Cardiac septum (tissue), 1 donor: ENCODE measurements at regions of chr11 and their contacts with region 1.

Region 1: DNA sequence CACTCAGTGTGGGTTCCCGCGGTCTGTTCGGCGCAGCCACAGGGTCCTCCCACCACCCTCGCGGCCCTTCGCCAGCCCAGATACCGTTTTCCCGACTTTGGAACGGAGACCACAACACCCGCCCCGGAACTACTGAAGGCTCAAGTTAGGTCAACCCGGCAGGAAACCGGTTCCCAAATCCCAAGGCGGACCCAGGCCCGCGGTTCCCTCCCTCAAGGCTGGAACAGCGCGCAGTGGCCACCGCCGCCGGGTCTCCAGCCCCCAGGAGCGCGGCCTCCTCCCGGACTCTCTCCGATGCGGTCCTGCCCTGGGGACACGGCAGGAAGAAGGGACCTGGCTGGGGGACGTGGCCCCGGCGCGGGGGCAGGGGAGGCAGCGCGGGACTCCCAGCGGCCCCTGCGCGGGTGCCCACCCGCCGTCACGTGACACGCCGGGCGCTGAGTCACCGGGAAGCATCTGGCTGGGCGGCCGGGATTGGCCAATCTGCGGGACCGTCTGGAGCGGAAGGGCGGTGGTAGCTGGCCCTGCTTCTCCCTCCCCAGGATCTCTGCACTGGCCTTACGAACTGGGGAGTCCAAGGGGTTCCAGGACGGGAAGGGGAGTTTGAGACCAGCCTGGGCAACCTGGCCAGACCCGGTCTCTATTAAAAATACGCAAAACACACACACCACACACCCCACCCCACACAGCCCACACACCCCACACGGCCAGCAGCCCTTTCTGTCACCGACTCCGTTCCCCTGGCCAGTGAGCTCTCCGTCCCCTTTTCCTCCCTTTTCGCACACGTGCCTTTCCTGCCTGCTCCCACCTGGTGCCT is 21.5 kb upstream of the MALAT1 start:
- DNase-seq: peak; percentile 99

Region 2: DNA sequence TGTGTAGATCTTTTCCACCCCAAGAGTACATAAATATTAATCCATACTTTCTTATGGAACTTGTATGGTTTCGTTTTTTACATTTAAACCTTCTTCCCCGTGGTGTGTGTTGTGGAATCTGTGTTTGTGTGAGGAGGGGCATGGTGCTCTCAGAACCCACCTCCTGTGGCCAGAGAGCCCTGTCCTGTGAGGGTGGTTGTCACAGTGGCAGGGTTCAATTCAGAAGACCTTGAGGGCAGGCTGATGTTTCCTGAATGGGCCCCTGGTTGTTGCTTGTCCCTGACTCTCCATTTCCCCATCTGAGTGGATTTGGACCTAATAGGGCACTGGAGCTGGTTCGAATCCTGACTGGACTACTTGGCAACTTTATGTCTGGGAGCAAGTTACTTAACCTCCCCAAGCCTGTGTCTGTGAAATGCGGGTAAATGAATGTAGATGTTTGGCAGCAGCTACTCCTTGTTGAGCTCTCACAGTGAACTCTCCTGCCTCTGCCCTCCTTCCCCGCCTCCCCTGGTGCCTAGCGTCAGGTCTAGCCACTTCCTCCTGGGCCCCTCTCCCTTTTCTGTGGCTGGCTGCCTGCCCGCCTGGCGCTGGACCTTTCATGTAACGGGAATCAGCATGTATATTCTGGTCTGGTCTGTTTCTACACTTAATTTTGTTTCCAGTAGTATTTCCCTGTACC is 47.5 kb before region 1 on chr11:
- intact Hi-C with region 1: no loop called
- DNase-seq: peak; percentile 90

Region 3: GRCh38 chr11:65491614-65492386 is 14.4 kb after region 1 on chr11:
- intact Hi-C with region 1: loop called (anchors 2 kb)
- DNase-seq: peak; percentile 91

Region 4: GRCh38 chr11:65497141-65498041 is 20.0 kb after region 1 on chr11:
- intact Hi-C with region 1: loop called (anchors 1 kb)
- DNase-seq: peak; percentile 99

Region 5: GRCh38 chr11:65546217-65546958 is 69.0 kb after region 1 on chr11:
- intact Hi-C with region 1: no loop called
- DNase-seq: peak; percentile 96

Region 6: DNA sequence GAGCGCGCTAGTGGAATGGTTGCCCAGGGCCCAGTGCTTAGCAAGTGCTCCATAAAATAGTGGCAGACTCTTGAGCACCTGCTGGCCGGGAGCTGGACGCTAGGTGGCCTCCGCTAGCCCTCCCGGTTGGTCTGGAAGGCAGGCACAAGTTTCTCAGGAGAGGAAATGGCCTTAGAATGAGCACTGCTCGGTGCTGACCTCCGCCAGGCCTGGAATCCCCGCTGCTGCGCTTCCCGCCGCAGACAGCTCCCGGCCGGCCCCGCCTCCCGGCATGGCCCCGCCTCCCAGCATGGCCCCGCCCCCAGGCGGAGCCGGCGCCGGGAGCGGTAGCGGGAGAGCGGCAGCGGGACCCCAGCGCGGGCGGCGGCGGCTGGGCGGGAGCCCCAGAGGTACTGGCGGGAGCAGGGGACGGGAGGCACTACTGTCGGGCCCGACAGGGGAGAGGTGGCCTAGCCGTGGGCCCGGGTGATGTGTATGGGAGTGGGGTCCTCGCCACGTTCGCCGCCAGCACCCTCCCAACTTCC is 160.5 kb after region 1 on chr11 and contains the start of gene SIPA1:
- intact Hi-C with region 1: no loop called
- DNase-seq: peak; percentile 92
- total RNA-seq, gene SIPA1: 29.7 TPM

Region 7: DNA sequence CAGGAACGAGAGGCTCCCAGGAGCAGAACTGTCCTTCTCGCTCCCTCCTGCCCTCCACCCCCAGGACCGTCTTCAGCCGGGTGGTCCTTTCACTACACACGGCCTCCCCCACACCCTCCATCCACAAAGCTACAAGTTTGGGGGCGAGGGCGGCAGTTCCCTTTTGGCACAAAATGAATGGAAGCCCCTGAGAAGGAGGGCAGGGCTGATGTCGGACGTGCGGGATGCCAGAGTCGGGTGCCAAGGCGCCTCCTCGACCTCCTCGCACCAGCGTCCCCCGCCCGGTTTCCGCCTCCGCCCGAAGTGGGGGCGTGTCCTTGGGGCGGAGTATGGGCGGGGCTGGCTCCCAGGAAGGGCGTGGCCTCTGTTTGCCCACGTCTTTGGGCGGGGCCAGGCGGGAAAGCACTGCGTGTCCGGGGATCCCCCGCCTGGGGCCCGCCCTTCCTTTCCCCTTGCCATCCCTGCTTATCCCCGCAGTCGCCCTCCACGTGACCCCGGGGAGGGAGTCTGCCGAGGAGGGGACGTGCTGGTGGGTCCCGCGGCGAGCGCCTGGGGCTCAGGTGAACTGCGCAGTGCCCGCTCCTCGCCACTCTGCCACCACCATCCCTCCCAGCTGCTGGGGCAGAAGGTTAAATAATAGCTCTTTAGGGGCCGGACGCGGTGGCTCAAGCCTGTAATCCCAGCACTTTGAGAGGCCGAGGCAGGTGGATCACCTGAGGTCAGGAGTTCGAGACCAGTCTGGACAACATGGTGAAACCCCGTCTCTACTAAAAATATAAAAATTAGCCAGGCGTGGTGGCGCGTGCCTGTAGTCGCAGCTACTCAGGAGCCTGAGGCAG is 396.2 kb after region 1 on chr11:
- intact Hi-C with region 1: no loop called
- DNase-seq: peak; percentile 99